Mucosa of descending colon (tissue), 3 donors: ENCODE measurements at regions of chr12 and their contacts with region 1.

Region 1: GRCh38 chr12:131642101-131642540 is 68.8 kb upstream of the SFSWAP start:
- DNase-seq: no peak
- ATAC-seq: no peak
- H3K4me3 ChIP-seq: no peak overlapping the region
- H3K4me1 ChIP-seq: no peaks in the 10 kb centered on the region
- CTCF ChIP-seq: no peak

Region 2: GRCh38 chr12:131311764-131312163 is 330.4 kb before region 1 on chr12:
- intact Hi-C with region 1: loop called in 1 of 2 experiments (anchors 5 kb)
- DNase-seq: no peak
- ATAC-seq: no peak
- H3K4me3 ChIP-seq: no peak overlapping the region
- H3K4me1 ChIP-seq: no peaks in the 10 kb centered on the region
- CTCF ChIP-seq: no peak

Region 3: GRCh38 chr12:131830335-131830913 is 188.3 kb after region 1 on chr12:
- intact Hi-C with region 1: no loop called
- DNase-seq: peak; percentile 59 to 79 (median 77)
- ATAC-seq: peak; percentile 77
- H3K4me3 ChIP-seq: no peak overlapping the region
- H3K4me1 ChIP-seq: peaks cover 11% of the 10 kb centered on the region
- CTCF ChIP-seq: no peak

Region 4: DNA sequence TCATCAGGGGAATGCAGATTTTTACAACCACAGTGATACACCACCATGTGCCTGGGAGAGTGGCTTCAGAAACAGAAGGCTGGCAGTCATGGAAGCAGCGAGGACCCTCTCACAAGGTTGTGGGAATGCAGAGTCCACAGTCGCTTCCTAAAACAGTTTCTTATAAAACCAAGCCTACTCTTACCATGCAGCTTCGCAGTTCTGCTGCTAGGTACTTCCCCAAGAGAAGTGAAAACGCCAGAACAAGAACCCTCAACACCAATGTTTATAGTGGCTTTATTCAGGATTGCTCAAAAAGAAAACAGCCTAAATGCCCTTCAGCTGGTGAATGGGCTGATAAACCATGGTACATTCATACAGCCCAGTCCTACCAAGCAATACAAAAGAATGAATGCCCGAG is 414.8 kb after region 1 on chr12:
- intact Hi-C with region 1: no loop called
- DNase-seq: no peak
- ATAC-seq: no peak
- H3K4me3 ChIP-seq: no peak overlapping the region
- H3K4me1 ChIP-seq: no peaks in the 10 kb centered on the region
- CTCF ChIP-seq: no peak